ENCODE measurements at regions of chr9 and their contacts with region 1.

Region 1: DNA sequence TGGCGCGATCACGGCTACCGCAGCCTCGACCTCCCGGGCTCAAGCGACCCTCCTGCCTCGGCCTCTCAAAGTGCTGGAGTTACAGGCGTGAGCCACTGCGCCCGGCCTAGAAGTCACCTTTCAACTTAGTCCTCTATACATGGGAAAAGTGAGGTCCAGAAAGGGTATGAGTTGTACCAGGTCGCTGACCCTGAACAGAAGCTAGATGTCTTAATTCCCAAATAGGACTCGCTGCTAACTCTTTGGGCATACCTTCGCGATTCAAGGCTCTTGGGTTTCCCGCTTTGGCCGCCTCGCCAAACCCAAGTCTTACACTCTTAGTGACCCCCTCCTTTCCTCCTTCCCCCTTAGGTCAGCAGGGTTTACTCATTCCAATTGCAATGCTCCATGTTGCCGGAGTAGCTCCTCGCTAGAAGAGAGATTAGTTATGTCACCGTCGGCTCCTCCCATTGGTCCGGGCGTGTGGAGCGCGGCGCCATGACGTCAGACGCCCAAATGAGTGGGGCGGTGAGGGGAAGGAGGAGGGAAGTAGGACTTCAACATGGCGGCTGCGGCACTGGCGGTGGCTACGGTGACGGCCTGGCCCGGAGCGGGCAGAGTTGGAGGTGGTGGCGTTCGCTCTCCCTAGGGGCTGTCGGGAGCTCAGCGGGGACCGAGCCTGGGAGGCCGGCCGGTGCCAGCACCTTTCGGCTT is at the start of gene UBAP1:
- DNase-seq: peak; percentile 92 to 99
- H3K4me3 ChIP-seq: peak within 1 kb of the TSS; percentile 82 to 83
- H3K27ac ChIP-seq: peak within 1 kb of the TSS; percentile 96 to 97
- H3K4me1 ChIP-seq: peaks cover 0 to 3% of the 10 kb centered on the region in 2 donors
- H3K27me3 ChIP-seq: no peaks in the 10 kb centered on the region
- CTCF ChIP-seq: peak in 1 of 3 experiments; percentile 5
- total RNA-seq, gene UBAP1: 26.0 TPM

Region 2: DNA sequence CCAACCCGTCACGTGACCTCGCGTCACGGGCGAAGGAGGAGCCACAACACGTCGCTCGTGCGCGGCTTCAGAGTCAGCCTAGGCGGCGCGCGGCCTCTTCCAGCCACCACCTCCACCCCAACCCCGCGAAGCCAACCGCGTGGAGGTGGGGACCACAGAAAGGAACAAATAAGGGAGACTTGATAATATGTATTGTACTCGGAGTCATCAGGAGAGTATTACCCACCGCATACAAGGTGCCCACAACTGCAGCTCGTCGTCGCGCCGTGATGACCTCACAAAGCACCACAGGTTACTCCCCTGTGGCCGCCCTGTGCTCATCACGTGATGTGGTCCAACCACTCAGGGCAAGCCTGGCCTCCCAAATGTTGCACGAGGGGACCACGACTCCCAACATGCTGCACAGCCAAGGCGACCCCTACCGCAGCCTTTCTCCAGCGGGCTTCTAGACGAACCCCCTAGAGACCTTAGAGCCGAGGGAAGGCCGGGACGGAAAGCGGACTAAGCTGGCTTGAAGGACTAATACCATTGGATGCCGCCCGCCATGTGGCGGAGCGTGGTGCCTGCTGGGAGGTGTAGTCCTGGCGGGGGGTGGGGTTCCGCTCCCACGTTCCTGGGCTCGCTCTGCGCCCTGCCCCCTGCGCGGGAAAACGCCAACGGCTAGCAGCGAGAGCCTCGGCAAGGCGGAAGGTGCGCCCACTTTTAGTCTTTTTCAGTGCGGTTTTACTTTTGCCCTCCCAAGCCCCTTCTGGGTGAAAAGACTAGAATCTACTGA is 129.6 kb before region 1 on chr9:
- intact Hi-C with region 1: loop called (anchors 2 kb)
- DNase-seq: peak; percentile 94 to 98
- H3K4me3 ChIP-seq: peak overlapping the region; percentile 95 to 98
- H3K27ac ChIP-seq: peak overlapping the region; percentile 85 to 95
- H3K4me1 ChIP-seq: peaks cover 6 to 9% of the 10 kb centered on the region in 2 donors
- H3K27me3 ChIP-seq: no peaks in the 10 kb centered on the region
- CTCF ChIP-seq: no peak

Region 3: DNA sequence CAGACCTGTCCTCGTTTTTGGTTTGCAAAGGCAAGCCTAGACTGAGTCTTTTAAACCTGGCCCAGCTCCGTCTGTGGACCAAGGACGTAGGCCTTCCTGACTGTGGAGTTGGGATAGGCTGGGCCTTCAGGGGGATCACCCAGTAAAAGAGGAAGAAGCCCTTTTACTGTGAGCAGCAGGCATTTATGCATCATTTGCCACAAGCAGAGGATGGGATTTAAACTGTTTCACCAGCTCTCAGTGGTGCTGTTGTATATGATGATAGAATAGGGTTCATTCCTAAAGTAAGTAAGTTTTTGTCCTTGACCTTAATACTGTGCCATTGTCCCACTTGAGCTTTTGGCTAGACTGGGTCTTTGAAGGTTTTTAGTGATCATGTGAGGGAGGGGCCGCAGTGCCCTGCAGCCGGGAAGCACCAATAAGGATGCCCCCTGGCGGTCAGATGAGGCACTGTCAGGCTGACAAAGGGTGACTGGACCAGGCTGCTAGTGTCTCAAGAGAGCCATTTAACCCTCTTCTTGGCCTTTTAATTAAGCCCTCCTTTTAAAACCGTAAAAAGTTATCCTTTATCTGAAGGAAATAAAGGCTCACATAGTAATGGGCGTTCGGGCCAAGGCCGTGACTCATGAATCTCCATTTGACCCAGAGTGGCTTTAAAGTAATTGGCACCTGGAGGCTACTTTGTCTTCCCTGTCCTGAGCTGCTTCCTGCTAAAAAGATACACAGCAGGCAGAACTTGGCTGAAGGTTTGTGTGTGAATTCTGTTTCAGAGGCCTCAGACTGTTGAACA is 74.2 kb after region 1 on chr9:
- intact Hi-C with region 1: loop called (anchors 2 kb)
- DNase-seq: peak in 1 of 2 donors; percentile 71
- H3K4me3 ChIP-seq: no peak overlapping the region
- H3K27ac ChIP-seq: peak overlapping the region; percentile 79 to 81
- H3K4me1 ChIP-seq: peaks cover 16 to 48% of the 10 kb centered on the region in 2 donors
- H3K27me3 ChIP-seq: no peaks in the 10 kb centered on the region
- CTCF ChIP-seq: peak; percentile 59 to 86 (median 77)

Region 4: DNA sequence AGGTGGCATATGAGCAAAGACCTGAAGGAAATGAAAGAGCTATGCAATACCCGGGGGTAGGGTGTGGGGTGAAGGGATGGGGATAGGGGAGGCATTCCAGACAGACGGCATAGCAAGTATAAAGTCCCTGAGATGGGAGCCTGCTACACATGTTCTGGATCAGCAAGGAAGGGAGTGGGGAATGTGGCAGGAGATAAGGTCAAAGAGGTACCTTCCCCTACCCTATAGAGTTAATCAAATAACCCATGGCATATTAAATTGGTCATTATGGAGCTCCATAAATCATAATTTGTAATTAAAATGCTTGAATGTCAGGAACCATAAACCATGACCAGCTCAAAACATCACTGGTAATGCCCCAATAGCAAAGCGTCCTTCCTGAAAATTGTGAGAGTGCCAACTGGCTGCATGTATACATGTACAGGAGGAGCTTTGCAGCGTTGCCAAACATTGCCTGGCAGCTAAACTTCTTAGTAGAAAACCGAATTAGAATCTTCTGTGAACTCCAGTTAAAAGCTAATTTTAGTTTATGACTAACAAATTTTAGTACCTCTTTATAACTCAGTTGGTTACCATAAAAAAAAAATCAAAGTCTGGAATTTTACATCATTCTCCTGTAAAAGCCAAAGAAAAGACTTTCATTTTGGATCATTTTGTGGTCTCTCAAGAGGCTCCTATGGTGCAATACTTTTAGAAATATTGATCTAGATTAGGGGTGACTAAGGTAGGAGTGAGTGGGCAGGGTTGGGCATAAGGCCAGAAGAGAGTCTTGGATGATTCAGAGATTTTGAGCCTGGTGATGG is 284.6 kb after region 1 on chr9:
- intact Hi-C with region 1: loop called (anchors 5 kb)
- DNase-seq: peak in 1 of 2 donors; percentile 72
- H3K4me3 ChIP-seq: no peak overlapping the region
- H3K27ac ChIP-seq: peak overlapping the region; percentile 33 to 48
- H3K4me1 ChIP-seq: peaks cover 0 to 3% of the 10 kb centered on the region in 2 donors
- H3K27me3 ChIP-seq: no peaks in the 10 kb centered on the region
- CTCF ChIP-seq: no peak

Region 5: DNA sequence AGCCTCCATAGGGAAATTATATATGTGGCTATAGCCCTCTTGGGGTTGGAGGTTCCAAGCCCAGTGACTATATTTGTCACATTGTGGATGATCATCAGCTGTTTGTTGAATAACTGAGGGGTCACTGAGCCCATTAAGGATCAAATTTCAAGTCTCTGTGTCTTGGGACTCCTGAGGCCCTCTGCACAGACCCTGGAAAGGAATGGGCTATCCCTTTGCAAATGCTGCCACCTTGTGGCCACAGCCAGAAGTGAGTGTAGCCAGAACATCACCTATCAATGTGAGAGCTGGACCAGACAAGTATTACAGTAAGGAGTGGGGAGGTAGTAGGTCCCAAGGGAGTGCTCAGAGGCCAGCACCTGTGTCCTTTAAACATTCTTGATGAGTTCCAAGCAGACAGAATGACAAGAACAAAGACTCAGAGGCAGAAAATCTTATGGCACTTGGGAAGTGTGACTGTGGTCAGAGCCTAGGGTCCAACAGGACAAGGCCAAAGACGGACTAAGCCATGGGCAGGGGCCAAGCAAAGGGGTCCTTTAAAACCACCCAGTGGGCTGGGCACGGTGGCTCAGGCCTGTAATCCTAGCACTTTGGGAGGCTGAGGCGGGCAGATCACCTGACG is 425.1 kb after region 1 on chr9:
- intact Hi-C with region 1: no loop called
- DNase-seq: peak in 1 of 2 donors; percentile 93
- H3K4me3 ChIP-seq: no peak overlapping the region
- H3K27ac ChIP-seq: no peak overlapping the region
- H3K4me1 ChIP-seq: no peaks in the 10 kb centered on the region
- H3K27me3 ChIP-seq: no peaks in the 10 kb centered on the region
- CTCF ChIP-seq: peak; percentile 77 to 93 (median 88)

Measured in ascending aorta (tissue), 2 donors.